Dorsolateral prefrontal cortex (tissue), 120 donors: ENCODE measurements at regions of chr11 and their contacts with region 1.

Region 1: GRCh38 chr11:94602430-94603372 is 35.5 kb downstream of the PIWIL4 start:
- DNase-seq: peak in 7 of 10 donors; percentile 51 to 84 (median 68)
- H3K4me3 ChIP-seq: peak overlapping the region in 4 of 59 donors; percentile 4 to 46 (median 12)
- H3K27ac ChIP-seq: peak overlapping the region in 5 of 59 donors; percentile 4 to 74 (median 30)
- H3K27me3 ChIP-seq: no peaks in the 10 kb centered on the region
- CTCF ChIP-seq: peak in 40 of 56 donors; percentile 10 to 89 (median 57)

Region 2: DNA sequence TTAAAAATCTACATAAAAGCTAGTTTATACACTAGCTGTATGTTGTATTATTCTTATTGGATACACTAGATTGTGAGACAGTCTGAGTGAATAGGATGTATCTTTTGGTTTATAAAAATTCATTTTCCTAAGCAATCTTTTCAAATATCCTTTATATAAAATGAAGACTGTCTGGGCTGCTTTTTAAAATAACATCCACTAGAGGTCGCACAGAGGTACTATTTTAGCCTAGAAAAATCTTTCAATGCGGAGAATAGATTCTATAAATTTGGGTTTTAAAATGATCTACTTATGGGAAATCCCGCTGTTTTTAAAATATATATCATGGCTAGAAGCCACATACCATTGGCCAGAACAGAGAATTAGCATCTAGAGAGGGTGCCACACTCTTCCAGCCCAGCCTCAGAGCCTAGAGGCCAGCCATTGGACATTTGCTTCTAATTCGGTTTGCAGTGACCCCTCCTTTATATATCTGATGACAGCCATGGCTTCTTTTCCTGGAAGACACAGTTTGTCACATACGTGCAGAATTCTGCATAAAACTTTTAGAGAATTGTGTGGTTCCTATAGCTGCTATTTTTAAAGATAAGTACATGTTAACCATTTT is 83.1 kb before region 1 on chr11:
- intact Hi-C with region 1: loop called (anchors 2 to 10 kb)
- DNase-seq: no peak
- H3K4me3 ChIP-seq: peak overlapping the region in 22 of 59 donors; percentile 7 to 46 (median 22)
- H3K27ac ChIP-seq: peak overlapping the region in 11 of 59 donors; percentile 6 to 75 (median 60)
- H3K27me3 ChIP-seq: no peaks in the 10 kb centered on the region
- CTCF ChIP-seq: peak in 55 of 56 donors; percentile 55 to 89 (median 72)